GM12878 (cell line): ENCODE measurements at regions of chr17 and their contacts with region 1.

Region 1: GRCh38 chr17:27236717-27237315 is 57.1 kb upstream of the WSB1 start:
- DNase-seq: no peak
- ATAC-seq: peak; percentile 50
- H3K4me3 ChIP-seq: no peak overlapping the region
- H3K27ac ChIP-seq: no peak overlapping the region
- H3K4me1 ChIP-seq: peaks cover 28% of the 10 kb centered on the region
- H3K27me3 ChIP-seq: no peaks in the 10 kb centered on the region
- CTCF ChIP-seq: peak; percentile 81 to 88 (median 87)
- EP300 ChIP-seq: no peak
- POLR2A ChIP-seq: no peak
- RAD21 ChIP-seq: peak; percentile 94

Region 2: GRCh38 chr17:27038676-27039075 is 198.1 kb before region 1 on chr17:
- CTCF ChIA-PET with region 1: no interaction called
- POLR2A ChIA-PET with region 1: no interaction called
- RAD21 ChIA-PET with region 1: no interaction called
- SMC1A ChIA-PET with region 1: no interaction called
- in situ Hi-C with region 1: no loop called
- intact Hi-C with region 1: no loop called
- DNase-seq: no peak
- ATAC-seq: no peak
- H3K4me3 ChIP-seq: no peak overlapping the region
- H3K27ac ChIP-seq: no peak overlapping the region
- H3K4me1 ChIP-seq: no peaks in the 10 kb centered on the region
- H3K27me3 ChIP-seq: no peaks in the 10 kb centered on the region
- CTCF ChIP-seq: no peak; a peak in 1 of 6 replicates
- EP300 ChIP-seq: no peak
- POLR2A ChIP-seq: no peak
- RAD21 ChIP-seq: no peak

Region 3: DNA sequence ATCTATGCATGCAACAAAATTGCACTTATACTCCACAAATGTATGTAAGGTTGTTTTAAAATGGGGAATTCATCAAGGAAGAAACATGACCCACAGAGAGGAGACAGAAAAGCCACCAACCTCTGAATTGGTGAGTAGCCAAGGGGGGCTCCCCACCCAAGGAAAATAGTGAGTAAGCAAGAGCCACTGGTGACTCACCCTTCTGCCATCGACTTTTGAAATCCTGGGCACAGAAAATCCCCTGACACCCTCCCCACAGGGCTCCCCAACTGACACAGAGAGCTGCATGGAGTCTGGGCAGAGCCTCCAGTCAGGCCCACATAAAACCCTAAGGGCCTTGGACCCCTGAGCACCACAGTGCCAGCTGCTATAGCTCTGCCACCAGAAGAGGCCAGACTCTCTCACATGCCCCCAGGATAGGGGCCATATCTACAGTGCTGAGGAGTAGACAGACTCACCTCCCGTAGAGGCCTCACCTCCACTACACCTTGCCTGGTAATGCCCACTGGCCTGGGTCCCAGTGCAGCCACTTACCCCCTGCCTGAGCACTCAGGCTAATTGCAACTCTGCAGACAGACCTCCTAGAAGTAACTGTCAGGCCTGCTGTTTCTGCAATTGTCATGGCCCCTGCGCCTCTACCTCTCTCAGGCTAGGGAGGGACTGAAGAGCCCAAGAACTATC is 187.6 kb before region 1 on chr17:
- CTCF ChIA-PET with region 1: no interaction called
- POLR2A ChIA-PET with region 1: no interaction called
- RAD21 ChIA-PET with region 1: no interaction called
- SMC1A ChIA-PET with region 1: no interaction called
- in situ Hi-C with region 1: no loop called
- intact Hi-C with region 1: no loop called
- DNase-seq: no peak
- ATAC-seq: no peak
- H3K4me3 ChIP-seq: no peak overlapping the region
- H3K27ac ChIP-seq: no peak overlapping the region
- H3K4me1 ChIP-seq: no peaks in the 10 kb centered on the region
- H3K27me3 ChIP-seq: no peaks in the 10 kb centered on the region
- CTCF ChIP-seq: no peak
- EP300 ChIP-seq: no peak
- POLR2A ChIP-seq: no peak
- RAD21 ChIP-seq: no peak

Region 4: GRCh38 chr17:27106347-27106981 is 130.4 kb before region 1 on chr17:
- CTCF ChIA-PET with region 1: no interaction called
- POLR2A ChIA-PET with region 1: no interaction called
- RAD21 ChIA-PET with region 1: no interaction called
- SMC1A ChIA-PET with region 1: no interaction called
- in situ Hi-C with region 1: no loop called
- intact Hi-C with region 1: no loop called
- DNase-seq: no peak
- ATAC-seq: no peak
- H3K4me3 ChIP-seq: no peak overlapping the region
- H3K27ac ChIP-seq: no peak overlapping the region
- H3K4me1 ChIP-seq: no peaks in the 10 kb centered on the region
- H3K27me3 ChIP-seq: no peaks in the 10 kb centered on the region
- CTCF ChIP-seq: no peak
- EP300 ChIP-seq: no peak
- POLR2A ChIP-seq: no peak
- RAD21 ChIP-seq: no peak

Region 5: GRCh38 chr17:27217631-27218030 is 19.2 kb before region 1 on chr17:
- CTCF ChIA-PET with region 1: interaction called, 78 read pairs
- POLR2A ChIA-PET with region 1: interaction called, 8 read pairs
- RAD21 ChIA-PET with region 1: interaction called, 67 read pairs
- SMC1A ChIA-PET with region 1: interaction called, 137 read pairs
- in situ Hi-C with region 1: no loop called
- intact Hi-C with region 1: no loop called
- DNase-seq: peak; percentile 89
- ATAC-seq: peak; percentile 88
- H3K4me3 ChIP-seq: no peak overlapping the region
- H3K27ac ChIP-seq: peak overlapping the region; percentile 72
- H3K4me1 ChIP-seq: peaks cover 38% of the 10 kb centered on the region
- H3K27me3 ChIP-seq: no peaks in the 10 kb centered on the region
- CTCF ChIP-seq: no peak
- EP300 ChIP-seq: peak; percentile 78 to 79; a peak in 3 of 4 replicates
- POLR2A ChIP-seq: no peak
- RAD21 ChIP-seq: no peak

Region 6: GRCh38 chr17:27299384-27300049 is 62.7 kb after region 1 on chr17:
- CTCF ChIA-PET with region 1: interaction called, 80 read pairs
- POLR2A ChIA-PET with region 1: interaction called, 6 read pairs
- RAD21 ChIA-PET with region 1: interaction called, 20 read pairs
- SMC1A ChIA-PET with region 1: interaction called, 14 read pairs
- in situ Hi-C with region 1: no loop called
- intact Hi-C with region 1: loop called (anchors 2 kb)
- DNase-seq: no peak
- ATAC-seq: peak; percentile 17
- H3K4me3 ChIP-seq: peak overlapping the region; percentile 39; the same call in 1 of the 2 replicates
- H3K27ac ChIP-seq: no peak overlapping the region
- H3K4me1 ChIP-seq: peaks cover 12% of the 10 kb centered on the region
- H3K27me3 ChIP-seq: no peaks in the 10 kb centered on the region
- CTCF ChIP-seq: no peak
- EP300 ChIP-seq: no peak
- POLR2A ChIP-seq: no peak
- RAD21 ChIP-seq: no peak

Region 7: GRCh38 chr17:27345141-27345904 is 108.5 kb after region 1 on chr17:
- CTCF ChIA-PET with region 1: interaction called, 106 read pairs
- POLR2A ChIA-PET with region 1: no interaction called
- RAD21 ChIA-PET with region 1: interaction called, 21 read pairs
- SMC1A ChIA-PET with region 1: interaction called, 13 read pairs
- in situ Hi-C with region 1: no loop called
- intact Hi-C with region 1: no loop called
- DNase-seq: no peak
- ATAC-seq: no peak
- H3K4me3 ChIP-seq: no peak overlapping the region
- H3K27ac ChIP-seq: no peak overlapping the region
- H3K4me1 ChIP-seq: peaks cover 17% of the 10 kb centered on the region
- H3K27me3 ChIP-seq: no peaks in the 10 kb centered on the region
- CTCF ChIP-seq: no peak
- EP300 ChIP-seq: no peak
- POLR2A ChIP-seq: no peak
- RAD21 ChIP-seq: no peak

Region 8: GRCh38 chr17:27455914-27456680 is 219.3 kb after region 1 on chr17 and contains the start of gene KSR1:
- CTCF ChIA-PET with region 1: interaction called, 8 read pairs
- POLR2A ChIA-PET with region 1: no interaction called
- RAD21 ChIA-PET with region 1: interaction called, 3 read pairs
- SMC1A ChIA-PET with region 1: interaction called, 7 read pairs
- in situ Hi-C with region 1: loop called (anchors 5 kb)
- intact Hi-C with region 1: loop called (anchors 5 kb)
- DNase-seq: no peak
- ATAC-seq: peak; percentile 89
- H3K4me3 ChIP-seq: peak within 1 kb of the TSS; percentile 89
- H3K27ac ChIP-seq: peak within 1 kb of the TSS; percentile 38
- H3K4me1 ChIP-seq: peaks cover 16% of the 10 kb centered on the region
- H3K27me3 ChIP-seq: no peaks in the 10 kb centered on the region
- CTCF ChIP-seq: peak; percentile 38 to 56 (median 42); a peak in 5 of 6 replicates
- EP300 ChIP-seq: no peak
- POLR2A ChIP-seq: peak; percentile 75
- RAD21 ChIP-seq: peak; percentile 44
- polyA plus RNA-seq, gene KSR1: 0.97 to 1.7 TPM

Region 9: DNA sequence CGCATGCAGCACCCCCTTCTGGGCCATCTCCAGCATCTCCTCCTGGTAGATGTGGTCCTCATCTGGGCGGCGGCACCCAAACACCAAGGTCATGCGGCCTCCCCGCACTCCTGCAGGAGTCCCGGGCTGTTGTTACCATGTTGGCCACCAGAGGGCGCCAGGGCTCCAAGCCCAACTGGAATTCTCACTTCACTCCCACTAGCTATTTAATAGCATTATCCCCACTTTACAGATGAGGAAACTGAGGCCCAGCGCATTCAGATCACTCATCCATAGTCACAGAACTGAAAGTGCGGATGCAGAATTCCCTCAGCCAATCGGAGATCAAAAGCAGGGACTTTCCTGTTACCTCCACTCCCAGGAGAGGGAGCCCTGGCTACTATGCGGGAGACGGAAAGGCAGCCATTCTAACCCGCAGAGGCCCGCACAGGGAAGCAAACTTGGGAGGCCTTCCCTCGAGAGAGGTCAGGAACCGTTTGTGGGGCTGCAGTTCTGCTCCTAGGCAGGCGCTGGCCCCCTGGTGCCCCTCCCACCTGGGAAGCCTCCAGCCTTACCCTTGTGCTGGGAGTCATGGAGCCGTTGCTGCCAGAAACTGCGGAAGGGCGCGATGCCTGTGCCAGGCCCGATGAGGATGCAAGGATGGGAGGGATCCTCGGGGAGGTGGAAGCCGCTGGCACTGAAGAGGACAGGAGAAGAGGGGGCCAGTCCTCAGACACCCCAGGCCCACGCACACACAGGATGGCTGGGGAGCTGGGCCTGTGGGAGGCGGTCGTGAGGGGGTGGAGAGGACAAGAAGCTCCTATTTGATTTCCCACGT is 523.5 kb after region 1 on chr17:
- CTCF ChIA-PET with region 1: interaction called, 10 read pairs
- POLR2A ChIA-PET with region 1: no interaction called
- RAD21 ChIA-PET with region 1: no interaction called
- SMC1A ChIA-PET with region 1: interaction called, 3 read pairs
- in situ Hi-C with region 1: no loop called
- intact Hi-C with region 1: loop called (anchors 2 kb)
- DNase-seq: no peak
- ATAC-seq: peak; percentile 84
- H3K4me3 ChIP-seq: no peak overlapping the region
- H3K27ac ChIP-seq: no peak overlapping the region
- H3K4me1 ChIP-seq: no peaks in the 10 kb centered on the region
- H3K27me3 ChIP-seq: no peaks in the 10 kb centered on the region
- CTCF ChIP-seq: peak; percentile 76 to 91 (median 78)
- EP300 ChIP-seq: no peak
- POLR2A ChIP-seq: no peak
- RAD21 ChIP-seq: peak; percentile 62